PC-9 (cell line): ENCODE measurements at regions of chr6 and their contacts with region 1.

Region 1: DNA sequence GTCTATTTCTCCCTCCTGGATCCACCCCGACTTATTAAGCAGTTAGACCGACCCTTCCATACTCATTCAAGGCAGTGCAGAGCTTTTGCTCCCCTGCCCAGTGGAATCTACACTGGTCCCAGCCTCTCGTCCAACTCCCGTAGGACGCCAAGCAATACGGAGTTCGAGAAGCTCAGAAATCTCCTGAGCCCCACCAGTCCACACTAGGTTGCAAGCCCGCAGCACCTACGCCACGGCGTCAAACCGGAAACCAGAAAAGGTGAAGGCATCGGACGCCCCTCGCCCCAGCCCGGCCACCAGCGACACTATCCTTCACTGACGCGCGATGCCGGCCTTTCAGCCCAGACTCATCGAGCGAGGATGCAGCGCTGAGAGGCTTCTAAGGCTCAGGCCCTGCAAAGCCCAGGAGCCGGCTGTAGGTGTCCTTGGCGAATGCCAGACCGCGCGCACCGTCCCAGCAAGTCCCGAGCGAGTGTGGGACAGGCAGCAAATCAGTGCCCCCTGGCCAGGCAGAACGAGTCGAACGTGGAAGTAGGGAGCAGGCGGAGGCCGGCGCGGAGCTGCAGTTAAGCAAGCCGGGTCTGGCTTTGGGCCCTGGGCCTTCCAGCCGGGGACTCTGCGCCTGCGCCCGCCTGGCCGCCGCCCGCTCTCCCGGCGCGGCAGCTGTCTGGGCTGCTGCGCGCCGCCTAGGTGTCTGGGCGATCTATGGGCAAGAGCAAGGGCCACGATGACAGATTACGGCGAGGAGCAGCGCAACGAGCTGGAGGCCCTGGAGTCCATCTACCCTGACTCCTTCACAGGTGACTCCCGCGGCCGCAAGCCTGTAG is at the start of gene RWDD1:
- DNase-seq: peak; percentile 99
- H3K4me3 ChIP-seq: peak within 1 kb of the TSS; percentile 95
- H3K27ac ChIP-seq: peak within 1 kb of the TSS; percentile 60
- H3K4me1 ChIP-seq: peaks cover 30% of the 10 kb centered on the region
- H3K27me3 ChIP-seq: no peaks in the 10 kb centered on the region
- CTCF ChIP-seq: 0 out of 2 replicates have a peak, but pooled peaks have one; percentile 25
- total RNA-seq, gene RWDD1: 21.5 and 22.9 TPM in 2 replicates

Region 2: DNA sequence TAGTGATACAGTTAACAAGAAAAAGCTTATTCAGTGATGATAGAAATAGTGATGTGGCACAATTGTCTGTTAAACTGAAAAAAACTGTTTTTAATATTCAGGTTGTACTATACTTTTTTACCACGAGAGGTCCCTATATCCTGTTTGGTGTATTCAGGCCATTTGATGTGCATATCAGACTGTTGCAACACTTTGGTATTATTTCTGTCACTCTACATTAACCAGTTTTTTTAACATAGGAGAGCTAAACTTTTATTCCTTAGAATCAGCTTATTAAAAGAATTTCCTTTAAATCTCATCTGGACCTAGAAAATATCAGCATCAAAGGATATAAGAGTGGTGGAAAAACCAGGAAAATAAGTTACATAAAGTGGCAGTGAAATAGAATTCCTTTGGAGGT is 354.0 kb before region 1 on chr6:
- CTCF ChIA-PET with region 1: no interaction called
- POLR2A ChIA-PET with region 1: no interaction called
- intact Hi-C with region 1: loop called (anchors 5 kb)
- DNase-seq: peak in 1 of 2 experiments; percentile 53
- H3K4me3 ChIP-seq: no peak overlapping the region
- H3K27ac ChIP-seq: peak overlapping the region; percentile 32; the same call in 1 of the 2 replicates
- H3K4me1 ChIP-seq: no peaks in the 10 kb centered on the region
- H3K27me3 ChIP-seq: no peaks in the 10 kb centered on the region
- CTCF ChIP-seq: peak; percentile 77

Region 3: DNA sequence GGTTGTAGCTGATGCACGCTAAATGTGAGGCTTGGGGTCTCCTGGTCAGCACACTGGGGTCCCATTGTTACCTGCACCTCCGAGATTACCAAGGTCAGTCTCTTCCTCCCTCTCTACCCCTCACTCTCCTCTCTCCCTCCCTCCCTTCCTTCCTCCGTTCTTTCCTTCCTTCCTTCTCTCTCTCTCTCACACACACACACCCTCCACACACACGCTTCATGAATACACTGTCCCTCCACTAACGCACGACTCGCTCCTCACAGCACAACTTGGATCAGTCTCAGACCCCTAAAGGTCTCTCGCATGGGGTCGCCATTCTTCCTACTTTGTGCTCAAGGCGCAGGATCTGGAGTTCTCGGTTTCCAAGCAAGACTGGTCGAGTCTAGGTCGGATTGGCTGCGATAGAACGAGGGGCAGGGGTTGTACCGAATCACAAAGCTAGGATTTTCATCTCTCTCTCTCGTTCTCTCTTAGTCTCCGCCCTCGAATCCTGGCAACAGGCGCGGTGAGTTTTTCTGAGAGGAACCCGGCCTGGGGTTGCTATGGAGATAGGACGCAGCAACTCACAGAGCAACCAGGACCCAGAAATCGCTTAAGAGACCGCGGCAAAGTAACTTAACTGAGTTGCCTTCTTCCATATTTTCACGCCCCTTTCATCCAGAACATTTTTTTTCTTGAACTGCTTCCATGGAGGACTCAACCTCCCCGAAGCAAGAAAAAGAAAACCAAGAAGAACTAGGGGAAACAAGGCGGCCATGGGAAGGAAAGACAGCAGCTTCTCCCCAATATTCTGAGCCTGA is 45.1 kb after region 1 on chr6 and contains the start of gene RSPH4A:
- CTCF ChIA-PET with region 1: no interaction called
- POLR2A ChIA-PET with region 1: no interaction called
- intact Hi-C with region 1: loop called (anchors 1 kb)
- DNase-seq: peak; percentile 86 to 91
- H3K4me3 ChIP-seq: peak within 1 kb of the TSS; percentile 87
- H3K27ac ChIP-seq: no peak within 1 kb of the TSS
- H3K4me1 ChIP-seq: peaks cover 9% of the 10 kb centered on the region
- H3K27me3 ChIP-seq: no peaks in the 10 kb centered on the region
- CTCF ChIP-seq: no peak
- total RNA-seq, gene RSPH4A: 0.13 and 0.24 TPM in 2 replicates

Region 4: GRCh38 chr6:116680975-116681808 is 110.1 kb after region 1 on chr6 and contains the start of gene KPNA5:
- CTCF ChIA-PET with region 1: no interaction called
- POLR2A ChIA-PET with region 1: no interaction called
- intact Hi-C with region 1: loop called (anchors 1 kb)
- DNase-seq: peak; percentile 84 to 87
- H3K4me3 ChIP-seq: peak within 1 kb of the TSS; percentile 84
- H3K27ac ChIP-seq: peak within 1 kb of the TSS; percentile 85
- H3K4me1 ChIP-seq: peaks cover 15% of the 10 kb centered on the region
- H3K27me3 ChIP-seq: no peaks in the 10 kb centered on the region
- CTCF ChIP-seq: no peak
- total RNA-seq, gene KPNA5: 6.6 and 6.8 TPM in 2 replicates